Natural killer cell (primary cell): ENCODE measurements at regions of chr19 and their contacts with region 1.

Region 1: DNA sequence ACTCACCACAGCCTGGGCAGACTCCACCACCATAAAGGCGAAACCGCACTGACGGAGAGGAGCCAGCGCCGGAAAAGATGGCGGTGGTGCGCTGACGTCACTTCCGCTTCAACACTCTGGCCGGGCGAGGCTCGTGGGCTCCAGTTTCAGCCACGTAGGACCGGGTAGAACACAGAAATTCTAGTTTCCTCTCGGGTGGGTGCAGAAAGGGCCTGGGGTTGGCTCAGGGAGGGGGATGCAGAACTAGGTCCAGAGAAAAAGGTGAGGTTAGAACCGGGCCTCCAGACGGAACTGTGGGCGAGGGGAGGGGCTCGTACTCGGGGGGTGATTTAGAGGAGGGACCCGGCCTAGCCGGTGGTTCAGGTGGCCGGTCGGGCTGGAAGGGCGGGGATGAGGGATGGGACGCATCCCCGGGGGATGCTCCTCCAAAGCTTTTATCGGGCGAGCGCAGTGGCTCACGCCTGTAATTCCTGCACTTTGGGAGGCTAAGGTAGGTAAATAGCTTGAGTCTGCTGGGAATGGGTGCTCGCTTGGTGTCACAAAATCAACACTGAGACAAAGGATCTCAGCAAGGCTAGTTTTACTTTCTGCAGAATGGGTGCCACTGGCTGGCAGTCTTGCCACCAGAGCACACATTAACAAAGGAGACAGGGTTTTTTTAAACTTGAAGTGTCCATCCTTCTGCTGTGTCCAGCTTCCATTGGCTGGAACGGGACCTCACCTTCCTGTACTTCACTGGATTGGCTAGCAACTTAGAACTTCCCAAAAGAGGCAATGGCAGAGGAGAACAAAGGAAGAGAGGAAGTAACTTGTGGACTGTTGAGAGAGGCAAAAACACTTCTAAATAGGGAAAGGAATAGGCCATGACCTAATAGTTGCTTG is at the start of gene ZNF561:
- DNase-seq: peak; percentile 86 to 97
- ATAC-seq: peak; percentile 85 to 93 (median 92)
- H3K4me3 ChIP-seq: peak within 1 kb of the TSS; percentile 77
- H3K4me3 Mint-ChIP-seq: peak within 1 kb of the TSS; percentile 97
- H3K27ac ChIP-seq: peak within 1 kb of the TSS; percentile 84
- H3K27ac Mint-ChIP-seq: peak within 1 kb of the TSS; percentile 97 to 100
- H3K4me1 ChIP-seq: peaks cover 16% of the 10 kb centered on the region
- H3K4me1 Mint-ChIP-seq: peaks cover 22 to 27% of the 10 kb centered on the region in 2 donors
- H3K27me3 ChIP-seq: no peaks in the 10 kb centered on the region
- H3K27me3 Mint-ChIP-seq: no peaks in the 10 kb centered on the region
- CTCF ChIP-seq: no peak
- total RNA-seq, gene ZNF561: 32.2 to 47.3 (median 36.9) TPM

Region 2: DNA sequence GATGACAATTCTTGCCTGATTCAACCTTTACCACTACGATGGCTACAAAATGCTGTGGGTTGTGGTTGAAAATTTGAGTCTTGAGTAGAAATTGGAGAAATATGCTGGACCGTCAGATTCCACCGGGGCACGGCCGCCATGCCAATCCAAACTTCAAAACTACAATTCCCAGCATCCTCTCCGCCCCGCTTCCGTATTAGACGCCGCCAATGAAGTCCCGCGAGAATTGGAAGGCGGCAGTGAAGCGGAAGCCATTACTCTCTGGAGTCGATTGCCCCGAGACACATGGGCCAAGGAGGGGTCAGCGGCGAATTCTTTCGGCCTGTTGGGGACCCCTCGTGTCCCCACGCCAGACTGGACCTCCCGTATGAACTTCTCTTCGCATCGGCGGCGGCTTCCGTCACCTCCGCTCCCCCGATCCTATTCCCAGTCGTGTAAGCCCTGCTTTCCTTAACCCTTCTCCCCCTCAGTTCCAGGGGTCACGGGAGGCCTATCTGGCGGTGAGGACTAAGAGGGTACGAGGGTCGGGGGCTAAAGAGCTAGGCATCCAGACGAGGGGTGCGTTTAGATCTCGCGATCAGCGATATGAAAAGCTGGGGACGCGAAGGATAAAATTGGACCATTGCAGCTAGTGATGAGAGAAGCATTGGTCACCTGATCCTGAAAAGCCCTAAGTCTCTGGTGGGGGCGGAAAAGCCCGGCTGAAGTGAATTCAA is 481.1 kb before region 1 on chr19 and contains the start of gene ZNF317:
- intact Hi-C with region 1: loop called (anchors 10 kb)
- DNase-seq: peak; percentile 85 to 96
- ATAC-seq: peak; percentile 95 to 96 (median 96)
- H3K4me3 ChIP-seq: peak within 1 kb of the TSS; percentile 97
- H3K4me3 Mint-ChIP-seq: peak within 1 kb of the TSS; percentile 98
- H3K27ac ChIP-seq: peak within 1 kb of the TSS; percentile 91
- H3K27ac Mint-ChIP-seq: peak within 1 kb of the TSS; percentile 95 to 99
- H3K4me1 ChIP-seq: peaks cover 13% of the 10 kb centered on the region
- H3K4me1 Mint-ChIP-seq: peaks cover 35 to 46% of the 10 kb centered on the region in 2 donors
- H3K27me3 ChIP-seq: no peaks in the 10 kb centered on the region
- H3K27me3 Mint-ChIP-seq: peaks cover 0 to 2% of the 10 kb centered on the region in 2 donors
- CTCF ChIP-seq: no peak
- total RNA-seq, gene ZNF317: 78.0 to 91.2 (median 82.8) TPM

Region 3: GRCh38 chr19:9435279-9436268 is 185.8 kb before region 1 on chr19 and contains the start of gene ZNF266:
- intact Hi-C with region 1: loop called (anchors 1 kb)
- DNase-seq: peak; percentile 91 to 98
- ATAC-seq: peak; percentile 81 to 91 (median 84)
- H3K4me3 ChIP-seq: peak within 1 kb of the TSS; percentile 73
- H3K4me3 Mint-ChIP-seq: peak within 1 kb of the TSS; percentile 98
- H3K27ac ChIP-seq: peak within 1 kb of the TSS; percentile 91
- H3K27ac Mint-ChIP-seq: peak within 1 kb of the TSS; percentile 97
- H3K4me1 ChIP-seq: peaks cover 14% of the 10 kb centered on the region
- H3K4me1 Mint-ChIP-seq: peaks cover 53 to 59% of the 10 kb centered on the region in 2 donors
- H3K27me3 ChIP-seq: no peaks in the 10 kb centered on the region
- H3K27me3 Mint-ChIP-seq: no peaks in the 10 kb centered on the region
- CTCF ChIP-seq: peak; percentile 75
- total RNA-seq, gene ZNF266: 89.9 to 108 (median 104) TPM

Region 4: DNA sequence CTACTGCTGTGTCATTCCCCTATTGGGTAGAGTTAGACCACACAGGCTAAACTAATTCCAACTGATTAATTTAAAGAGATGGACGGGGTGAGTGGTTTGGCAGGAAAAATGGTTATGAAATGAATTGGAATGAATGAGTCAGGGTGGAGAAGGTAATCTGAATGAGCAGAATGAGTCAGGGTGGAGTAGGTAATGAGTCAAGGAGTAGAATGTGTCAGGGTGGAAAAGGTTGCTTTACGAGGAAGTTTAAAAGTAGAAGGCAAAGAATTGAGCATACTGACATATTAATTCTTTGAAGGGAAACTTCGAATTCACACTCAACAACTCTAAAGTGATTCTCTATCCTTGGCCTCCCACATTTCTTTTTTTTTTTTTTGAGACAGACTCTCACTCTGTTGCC is 24.4 kb before region 1 on chr19:
- intact Hi-C with region 1: no loop called
- DNase-seq: no peak
- ATAC-seq: no peak
- H3K4me3 ChIP-seq: no peak overlapping the region
- H3K4me3 Mint-ChIP-seq: no peak overlapping the region
- H3K27ac ChIP-seq: no peak overlapping the region
- H3K27ac Mint-ChIP-seq: no peak overlapping the region
- H3K4me1 ChIP-seq: no peaks in the 10 kb centered on the region
- H3K4me1 Mint-ChIP-seq: no peaks in the 10 kb centered on the region
- H3K27me3 ChIP-seq: no peaks in the 10 kb centered on the region
- H3K27me3 Mint-ChIP-seq: peaks cover 9 to 15% of the 10 kb centered on the region in 2 donors
- CTCF ChIP-seq: no peak

Region 5: GRCh38 chr19:9674663-9675357 is 53.4 kb after region 1 on chr19 and contains the start of gene ZNF562:
- intact Hi-C with region 1: loop called (anchors 2 kb)
- DNase-seq: peak; percentile 79 to 88
- ATAC-seq: peak; percentile 91 to 92 (median 92)
- H3K4me3 ChIP-seq: peak within 1 kb of the TSS; percentile 91
- H3K4me3 Mint-ChIP-seq: peak within 1 kb of the TSS; percentile 99
- H3K27ac ChIP-seq: peak within 1 kb of the TSS; percentile 95
- H3K27ac Mint-ChIP-seq: peak within 1 kb of the TSS; percentile 96 to 100
- H3K4me1 ChIP-seq: peaks cover 11% of the 10 kb centered on the region
- H3K4me1 Mint-ChIP-seq: peaks cover 36 to 40% of the 10 kb centered on the region in 2 donors
- H3K27me3 ChIP-seq: no peaks in the 10 kb centered on the region
- H3K27me3 Mint-ChIP-seq: no peaks in the 10 kb centered on the region
- CTCF ChIP-seq: no peak
- total RNA-seq, gene ZNF562: 21.6 to 25.3 (median 23.1) TPM

Region 6: DNA sequence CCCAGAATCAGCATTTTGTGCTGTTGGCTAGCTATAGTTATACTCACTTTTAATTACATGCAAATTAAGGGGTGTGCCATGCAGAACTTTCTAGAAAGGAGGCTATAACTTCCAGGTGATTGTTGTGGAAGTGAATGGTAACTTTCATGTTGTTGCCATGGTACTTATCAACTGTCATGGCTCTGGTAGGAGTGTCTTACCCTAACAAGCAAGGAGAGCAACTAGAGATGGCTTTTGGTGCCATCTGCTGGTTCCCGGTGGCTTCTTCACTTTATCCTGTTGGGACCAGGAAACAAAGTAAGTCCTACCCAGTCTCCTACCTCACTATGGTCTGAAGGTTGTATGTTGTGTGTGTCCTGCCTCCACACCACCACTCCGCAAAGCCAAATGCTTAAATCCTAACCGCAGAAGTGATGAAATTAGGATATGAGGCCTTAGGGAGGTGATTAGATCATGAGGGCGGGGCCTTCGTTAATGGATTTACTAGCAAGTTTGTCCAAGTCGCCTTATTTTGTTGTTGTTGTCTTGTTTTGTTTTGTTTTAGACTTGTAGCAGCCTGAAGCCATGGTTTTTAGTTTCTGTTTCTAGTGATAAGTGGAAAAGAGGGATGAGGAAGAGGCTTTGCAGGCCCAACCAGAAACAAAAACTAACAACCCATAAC is 174.8 kb after region 1 on chr19:
- intact Hi-C with region 1: loop called (anchors 1 kb)
- DNase-seq: peak; percentile 75 to 95
- ATAC-seq: peak; percentile 41 to 70 (median 48)
- H3K4me3 ChIP-seq: no peak overlapping the region
- H3K4me3 Mint-ChIP-seq: no peak overlapping the region
- H3K27ac ChIP-seq: peak overlapping the region; percentile 77
- H3K27ac Mint-ChIP-seq: peak overlapping the region; percentile 39 to 70
- H3K4me1 ChIP-seq: peaks cover 10% of the 10 kb centered on the region
- H3K4me1 Mint-ChIP-seq: peaks cover 19 to 26% of the 10 kb centered on the region in 2 donors
- H3K27me3 ChIP-seq: no peaks in the 10 kb centered on the region
- H3K27me3 Mint-ChIP-seq: no peaks in the 10 kb centered on the region
- CTCF ChIP-seq: peak; percentile 90